ENCODE measurements at regions of chr17 and their contacts with region 1.

Region 1: GRCh38 chr17:27473748-27474609 is 17.7 kb downstream of the KSR1 start:
- DNase-seq: no peak
- ATAC-seq: no peak
- H3K4me3 ChIP-seq: no peak overlapping the region
- H3K27ac ChIP-seq: peak overlapping the region in 1 of 2 experiments; percentile 66; a peak in 4 of 6 replicates
- H3K4me1 ChIP-seq: peaks cover 38% of the 10 kb centered on the region
- CTCF ChIP-seq: no peak
- EP300 ChIP-seq: no peak
- POLR2A ChIP-seq: no peak
- RAD21 ChIP-seq: no peak

Region 2: GRCh38 chr17:27489045-27489715 is 15.2 kb after region 1 on chr17:
- CTCF ChIA-PET with region 1: interaction called, 19 read pairs
- POLR2A ChIA-PET with region 1: no interaction called
- DNase-seq: peak; percentile 28 to 67
- ATAC-seq: peak; percentile 51 to 85; a peak in 5 of 6 replicates
- H3K4me3 ChIP-seq: no peak overlapping the region
- H3K27ac ChIP-seq: peak overlapping the region; percentile 25 to 63; a peak in 5 of 6 replicates
- H3K4me1 ChIP-seq: peaks cover 53% of the 10 kb centered on the region
- CTCF ChIP-seq: no peak
- EP300 ChIP-seq: no peak
- POLR2A ChIP-seq: no peak
- RAD21 ChIP-seq: no peak

Region 3: GRCh38 chr17:27631411-27631760 is 157.4 kb after region 1 on chr17:
- CTCF ChIA-PET with region 1: no interaction called
- POLR2A ChIA-PET with region 1: no interaction called
- DNase-seq: no peak
- ATAC-seq: peak in 1 of 2 experiments; percentile 16; a peak in 2 of 6 replicates
- H3K4me3 ChIP-seq: no peak overlapping the region
- H3K27ac ChIP-seq: no peak overlapping the region
- H3K4me1 ChIP-seq: no peaks in the 10 kb centered on the region
- CTCF ChIP-seq: no peak
- EP300 ChIP-seq: no peak
- POLR2A ChIP-seq: no peak
- RAD21 ChIP-seq: no peak

Region 4: GRCh38 chr17:27644586-27644985 is 170.6 kb after region 1 on chr17:
- CTCF ChIA-PET with region 1: no interaction called
- POLR2A ChIA-PET with region 1: no interaction called
- DNase-seq: no peak
- ATAC-seq: no peak
- H3K4me3 ChIP-seq: no peak overlapping the region
- H3K27ac ChIP-seq: no peak overlapping the region
- H3K4me1 ChIP-seq: no peaks in the 10 kb centered on the region
- CTCF ChIP-seq: no peak
- EP300 ChIP-seq: no peak
- POLR2A ChIP-seq: no peak
- RAD21 ChIP-seq: no peak